ENCODE measurements at regions of chr14 and their contacts with region 1.

Region 1: GRCh38 chr14:61493239-61493638 is 171.9 kb downstream of the PRKCH start:
- DNase-seq: no peak
- ATAC-seq: no peak
- H3K4me3 Mint-ChIP-seq: no peak overlapping the region
- H3K27ac Mint-ChIP-seq: no peak overlapping the region
- H3K4me1 Mint-ChIP-seq: peaks cover 57% of the 10 kb centered on the region
- H3K27me3 Mint-ChIP-seq: no peaks in the 10 kb centered on the region

Region 2: DNA sequence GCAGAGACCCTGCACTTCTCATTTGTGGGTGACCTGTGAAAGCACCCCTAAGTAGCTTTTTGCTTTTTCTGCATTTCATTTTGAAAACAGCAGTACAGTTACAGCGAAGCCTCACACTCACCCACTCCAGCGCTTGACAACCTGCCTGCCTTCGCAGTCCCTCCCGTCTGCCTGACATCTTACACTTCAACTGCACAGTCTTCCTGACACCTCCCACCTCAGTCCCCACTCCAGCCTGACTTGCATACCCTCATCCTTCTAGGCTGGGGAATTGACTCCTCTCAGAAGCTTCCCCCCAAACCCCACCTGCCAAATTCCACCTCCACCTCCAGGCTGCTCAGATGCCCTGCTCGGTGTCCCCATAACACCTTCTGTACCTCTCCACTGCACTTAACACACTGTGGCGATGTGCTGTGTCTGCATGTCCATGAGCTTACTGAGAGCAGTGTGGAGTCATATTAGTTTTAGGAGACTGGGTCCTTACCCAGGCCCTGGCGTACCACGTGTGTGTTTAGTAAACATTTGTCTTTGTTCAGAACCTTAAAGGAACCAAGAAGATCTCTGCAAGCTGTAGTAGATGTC is 12.4 kb before region 1 on chr14:
- CTCF ChIA-PET with region 1: interaction called, 49 read pairs
- POLR2A ChIA-PET with region 1: interaction called, 10 read pairs
- intact Hi-C with region 1: loop called in 1 of 2 experiments (anchors 1 kb)
- DNase-seq: peak; percentile 31
- ATAC-seq: no peak
- H3K4me3 Mint-ChIP-seq: peak overlapping the region; percentile 20
- H3K27ac Mint-ChIP-seq: peak overlapping the region; percentile 99
- H3K4me1 Mint-ChIP-seq: peaks cover 93% of the 10 kb centered on the region
- H3K27me3 Mint-ChIP-seq: no peaks in the 10 kb centered on the region